ENCODE measurements at regions of chr15 and their contacts with region 1.

Region 1: DNA sequence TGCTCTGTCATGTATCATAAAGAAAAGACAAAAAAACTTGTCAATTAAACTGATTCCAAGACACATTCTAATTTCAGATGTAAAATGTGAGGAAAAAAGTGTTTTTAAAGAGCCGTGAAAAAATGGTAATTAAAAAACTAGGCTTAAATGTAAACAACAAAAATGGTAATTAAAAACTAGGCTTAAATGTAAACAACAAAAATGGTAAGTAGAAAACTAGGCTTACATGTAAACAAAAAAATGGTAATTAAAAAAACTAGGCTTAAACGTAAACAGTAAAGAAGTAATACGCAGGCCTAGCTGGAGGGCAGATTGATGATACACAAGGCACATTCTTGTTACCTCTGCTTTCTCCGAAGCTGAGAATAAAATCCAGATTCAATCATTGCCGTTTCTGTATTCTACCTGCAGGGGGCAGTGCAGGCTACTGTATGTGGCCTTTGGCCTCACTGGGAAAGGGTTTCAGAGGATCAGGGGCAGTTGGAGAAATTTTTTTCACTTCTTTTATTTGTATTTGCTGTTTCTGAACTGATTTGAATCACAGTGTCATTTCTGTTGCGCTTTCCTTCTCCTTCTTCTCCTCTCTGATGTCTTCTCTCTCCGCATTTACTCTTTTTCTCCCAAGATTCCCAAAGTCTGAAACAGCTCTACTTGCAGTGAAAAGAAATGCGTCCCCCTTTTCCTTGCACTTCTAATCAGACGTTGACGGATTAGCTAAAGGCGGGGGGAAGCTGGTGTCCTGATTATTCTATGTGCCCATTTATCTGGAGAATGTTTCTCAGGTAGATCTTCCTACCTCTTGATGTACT is 67.2 kb upstream of the MCTP2 start:
- DNase-seq: no peak
- H3K4me3 ChIP-seq: no peak overlapping the region
- CTCF ChIP-seq: peak; percentile 63

Region 2: GRCh38 chr15:93730724-93731123 is 433.5 kb before region 1 on chr15:
- CTCF ChIA-PET with region 1: no interaction called
- POLR2A ChIA-PET with region 1: no interaction called
- DNase-seq: no peak
- H3K4me3 ChIP-seq: no peak overlapping the region
- CTCF ChIP-seq: no peak

Region 3: GRCh38 chr15:94105760-94106159 is 58.4 kb before region 1 on chr15:
- CTCF ChIA-PET with region 1: no interaction called
- POLR2A ChIA-PET with region 1: no interaction called
- DNase-seq: no peak
- H3K4me3 ChIP-seq: no peak overlapping the region
- CTCF ChIP-seq: no peak

Region 4: GRCh38 chr15:94145046-94145445 is 19.2 kb before region 1 on chr15:
- CTCF ChIA-PET with region 1: interaction called, 10 read pairs
- POLR2A ChIA-PET with region 1: no interaction called
- DNase-seq: no peak
- H3K4me3 ChIP-seq: no peak overlapping the region
- CTCF ChIP-seq: no peak

Region 5: GRCh38 chr15:94174399-94174802 is 10.2 kb after region 1 on chr15:
- CTCF ChIA-PET with region 1: interaction called, 21 read pairs
- POLR2A ChIA-PET with region 1: no interaction called
- DNase-seq: peak; percentile 49
- H3K4me3 ChIP-seq: no peak overlapping the region
- CTCF ChIP-seq: no peak

Region 6: DNA sequence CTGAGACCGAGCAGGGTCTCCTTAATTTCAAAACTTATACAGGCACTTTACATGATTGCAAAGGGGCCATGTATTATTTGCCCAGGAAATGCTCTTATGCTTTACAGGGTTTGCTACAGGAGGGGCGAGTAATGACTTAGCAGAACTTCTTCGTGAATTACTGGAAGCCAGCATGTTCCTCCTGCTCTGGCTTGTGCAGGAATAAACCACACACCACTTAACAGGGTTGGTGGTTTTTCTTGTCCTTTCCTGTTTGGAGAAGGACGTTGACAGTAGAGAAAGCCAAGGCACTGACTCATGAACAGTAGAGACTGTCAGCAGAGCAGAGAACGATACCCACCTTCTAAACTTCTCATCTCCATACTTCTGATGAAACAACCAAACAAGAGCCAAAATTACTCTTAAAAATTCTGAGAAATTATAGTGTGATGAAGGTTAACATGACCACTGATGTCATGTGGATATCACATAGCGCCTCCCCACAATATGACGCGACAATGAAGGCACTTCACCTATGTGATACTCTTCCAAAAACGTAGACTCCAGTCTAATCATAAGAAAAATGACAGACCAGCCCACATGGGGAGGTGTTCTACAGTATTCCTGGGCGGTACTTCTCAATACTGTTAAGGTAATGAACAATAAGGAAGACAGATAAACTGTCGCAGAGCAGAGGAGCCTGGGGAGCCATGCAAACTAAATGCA is 42.4 kb after region 1 on chr15:
- CTCF ChIA-PET with region 1: no interaction called
- POLR2A ChIA-PET with region 1: no interaction called
- DNase-seq: peak; percentile 93
- H3K4me3 ChIP-seq: no peak overlapping the region
- CTCF ChIP-seq: no peak

Region 7: GRCh38 chr15:94230956-94231722 is 66.9 kb after region 1 on chr15 and contains the start of gene MCTP2:
- CTCF ChIA-PET with region 1: interaction called, 20 read pairs
- POLR2A ChIA-PET with region 1: no interaction called
- DNase-seq: peak; percentile 50
- H3K4me3 ChIP-seq: peak within 1 kb of the TSS; percentile 63
- CTCF ChIP-seq: peak; percentile 36

Region 8: DNA sequence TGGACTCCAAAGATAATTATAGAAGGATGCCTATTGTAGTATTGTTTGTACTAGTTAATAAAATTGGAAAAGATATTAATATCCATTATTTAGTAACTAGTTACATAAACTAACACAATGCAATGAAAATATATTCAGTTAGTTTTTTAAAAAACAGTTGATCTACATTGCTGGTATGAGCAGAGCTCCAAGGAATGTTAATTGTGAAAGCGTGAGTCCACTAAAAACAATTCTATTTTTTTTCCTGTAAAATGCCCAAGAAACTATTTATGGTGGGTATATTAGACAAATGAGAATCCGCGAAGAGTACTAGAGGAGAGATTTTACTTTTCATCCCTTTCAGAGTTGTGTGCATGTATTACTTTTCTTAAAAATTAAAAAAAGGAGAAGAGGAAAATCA is 171.4 kb after region 1 on chr15:
- CTCF ChIA-PET with region 1: interaction called, 40 read pairs
- POLR2A ChIA-PET with region 1: no interaction called
- DNase-seq: no peak
- H3K4me3 ChIP-seq: no peak overlapping the region
- CTCF ChIP-seq: no peak

Measured in AG04449 (cell line).